ENCODE measurements at regions of chr14 and their contacts with region 1.

Region 1: GRCh38 chr14:71855399-71856036 is 76.7 kb upstream of the RGS6 start:
- DNase-seq: peak; percentile 31
- ATAC-seq: peak; percentile 85
- H3K4me3 ChIP-seq: no peak overlapping the region
- H3K27ac ChIP-seq: peak overlapping the region; percentile 58; the same call in 1 of the 2 replicates
- H3K4me1 ChIP-seq: peaks cover 10% of the 10 kb centered on the region
- H3K27me3 ChIP-seq: no peaks in the 10 kb centered on the region
- CTCF ChIP-seq: peak; percentile 68 to 77 (median 71)
- EP300 ChIP-seq: no peak
- POLR2A ChIP-seq: no peak
- RAD21 ChIP-seq: peak; percentile 78

Region 2: GRCh38 chr14:71116568-71117120 is 738.9 kb before region 1 on chr14:
- CTCF ChIA-PET with region 1: interaction called, 12 read pairs
- POLR2A ChIA-PET with region 1: no interaction called
- RAD21 ChIA-PET with region 1: interaction called, 4 read pairs
- SMC1A ChIA-PET with region 1: no interaction called
- in situ Hi-C with region 1: no loop called
- intact Hi-C with region 1: no loop called
- DNase-seq: peak; percentile 25
- ATAC-seq: peak; percentile 76
- H3K4me3 ChIP-seq: no peak overlapping the region
- H3K27ac ChIP-seq: no peak overlapping the region
- H3K4me1 ChIP-seq: peaks cover 4% of the 10 kb centered on the region
- H3K27me3 ChIP-seq: no peaks in the 10 kb centered on the region
- CTCF ChIP-seq: no peak
- EP300 ChIP-seq: no peak
- POLR2A ChIP-seq: no peak
- RAD21 ChIP-seq: no peak

Region 3: GRCh38 chr14:71703477-71703876 is 152.0 kb before region 1 on chr14:
- CTCF ChIA-PET with region 1: no interaction called
- POLR2A ChIA-PET with region 1: no interaction called
- RAD21 ChIA-PET with region 1: no interaction called
- SMC1A ChIA-PET with region 1: no interaction called
- in situ Hi-C with region 1: no loop called
- intact Hi-C with region 1: no loop called
- DNase-seq: no peak
- ATAC-seq: no peak
- H3K4me3 ChIP-seq: no peak overlapping the region
- H3K27ac ChIP-seq: no peak overlapping the region
- H3K4me1 ChIP-seq: no peaks in the 10 kb centered on the region
- H3K27me3 ChIP-seq: no peaks in the 10 kb centered on the region
- CTCF ChIP-seq: no peak
- EP300 ChIP-seq: no peak
- POLR2A ChIP-seq: no peak
- RAD21 ChIP-seq: no peak

Region 4: DNA sequence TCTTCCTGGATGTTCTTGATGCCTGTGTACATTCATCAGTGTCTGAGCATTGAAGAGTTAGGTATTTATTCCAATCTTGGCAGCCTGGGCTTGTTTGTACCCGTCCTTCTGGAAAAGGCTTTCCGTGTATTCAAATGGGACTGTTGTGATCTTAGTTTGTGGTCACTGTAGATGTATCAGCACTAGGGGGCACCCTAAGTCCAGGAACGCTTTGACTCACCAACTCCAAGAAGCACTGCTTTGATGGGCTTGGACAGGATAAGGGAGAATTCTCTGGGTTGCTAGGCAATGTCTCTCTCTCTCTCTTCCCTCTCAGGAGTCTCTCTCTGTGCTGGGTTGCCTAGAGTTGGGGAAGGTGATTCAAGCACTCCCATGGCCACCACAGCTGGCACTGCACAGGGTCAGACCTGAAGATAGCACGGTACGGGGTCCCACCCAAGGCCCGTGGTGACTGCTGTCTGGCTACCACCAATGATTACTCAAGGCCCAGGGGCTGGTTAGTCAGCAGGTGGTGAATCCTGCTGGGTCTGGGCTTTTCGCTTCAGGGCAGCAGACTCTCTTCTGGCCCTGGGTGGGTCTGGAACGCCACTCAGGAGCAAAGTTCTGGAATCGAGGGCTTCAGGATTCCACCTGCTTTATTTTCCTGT is 134.4 kb before region 1 on chr14:
- CTCF ChIA-PET with region 1: interaction called, 36 read pairs
- POLR2A ChIA-PET with region 1: interaction called, 3 read pairs
- RAD21 ChIA-PET with region 1: interaction called, 4 read pairs
- SMC1A ChIA-PET with region 1: interaction called, 8 read pairs
- in situ Hi-C with region 1: no loop called
- intact Hi-C with region 1: loop called (anchors 10 kb)
- DNase-seq: peak; percentile 11
- ATAC-seq: peak; percentile 86
- H3K4me3 ChIP-seq: no peak overlapping the region
- H3K27ac ChIP-seq: no peak overlapping the region
- H3K4me1 ChIP-seq: no peaks in the 10 kb centered on the region
- H3K27me3 ChIP-seq: no peaks in the 10 kb centered on the region
- CTCF ChIP-seq: peak; percentile 47 to 52 (median 51); a peak in 5 of 6 replicates
- EP300 ChIP-seq: no peak
- POLR2A ChIP-seq: no peak
- RAD21 ChIP-seq: peak; percentile 53

Region 5: GRCh38 chr14:71758229-71758951 is 97.1 kb before region 1 on chr14:
- CTCF ChIA-PET with region 1: interaction called, 84 read pairs
- POLR2A ChIA-PET with region 1: interaction called, 4 read pairs
- RAD21 ChIA-PET with region 1: interaction called, 44 read pairs
- SMC1A ChIA-PET with region 1: interaction called, 46 read pairs
- in situ Hi-C with region 1: no loop called
- intact Hi-C with region 1: loop called (anchors 10 kb)
- DNase-seq: no peak
- ATAC-seq: peak; percentile 85
- H3K4me3 ChIP-seq: no peak overlapping the region
- H3K27ac ChIP-seq: no peak overlapping the region
- H3K4me1 ChIP-seq: no peaks in the 10 kb centered on the region
- H3K27me3 ChIP-seq: no peaks in the 10 kb centered on the region
- CTCF ChIP-seq: no peak
- EP300 ChIP-seq: no peak
- POLR2A ChIP-seq: no peak
- RAD21 ChIP-seq: no peak

Region 6: DNA sequence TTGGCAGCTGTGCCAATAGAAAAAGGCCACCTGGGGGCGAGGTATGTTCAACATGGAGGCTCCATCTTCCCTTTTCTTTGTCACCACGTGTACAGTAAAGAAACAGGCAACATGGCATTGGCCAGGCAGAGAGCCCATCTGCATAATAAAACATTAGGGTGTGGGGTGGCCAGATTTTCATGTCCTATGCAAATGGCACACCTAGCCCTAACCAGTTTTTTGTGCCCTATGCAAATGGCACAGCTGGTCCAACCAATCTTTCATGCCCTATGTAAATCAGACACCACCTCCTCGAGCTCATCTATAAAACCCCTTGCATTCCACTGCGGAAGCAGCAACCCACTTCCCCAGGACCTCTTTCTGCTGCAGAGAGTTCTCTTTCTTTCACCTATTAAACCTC is 72.4 kb before region 1 on chr14:
- CTCF ChIA-PET with region 1: interaction called, 14 read pairs
- POLR2A ChIA-PET with region 1: interaction called, 3 read pairs
- RAD21 ChIA-PET with region 1: interaction called, 7 read pairs
- SMC1A ChIA-PET with region 1: interaction called, 10 read pairs
- in situ Hi-C with region 1: no loop called
- intact Hi-C with region 1: no loop called
- DNase-seq: no peak
- ATAC-seq: no peak
- H3K4me3 ChIP-seq: no peak overlapping the region
- H3K27ac ChIP-seq: no peak overlapping the region
- H3K4me1 ChIP-seq: no peaks in the 10 kb centered on the region
- H3K27me3 ChIP-seq: no peaks in the 10 kb centered on the region
- CTCF ChIP-seq: no peak
- EP300 ChIP-seq: no peak
- POLR2A ChIP-seq: no peak
- RAD21 ChIP-seq: no peak

Region 7: GRCh38 chr14:72420725-72421474 is 565.4 kb after region 1 on chr14:
- CTCF ChIA-PET with region 1: interaction called, 11 read pairs
- POLR2A ChIA-PET with region 1: no interaction called
- RAD21 ChIA-PET with region 1: interaction called, 3 read pairs
- SMC1A ChIA-PET with region 1: interaction called, 4 read pairs
- in situ Hi-C with region 1: no loop called
- intact Hi-C with region 1: no loop called
- DNase-seq: peak; percentile 49
- ATAC-seq: peak; percentile 83
- H3K4me3 ChIP-seq: no peak overlapping the region
- H3K27ac ChIP-seq: no peak overlapping the region
- H3K4me1 ChIP-seq: no peaks in the 10 kb centered on the region
- H3K27me3 ChIP-seq: no peaks in the 10 kb centered on the region
- CTCF ChIP-seq: peak; percentile 91 to 97 (median 95)
- EP300 ChIP-seq: no peak
- POLR2A ChIP-seq: no peak
- RAD21 ChIP-seq: peak; percentile 99